ENCODE measurements at regions of chr19 and their contacts with region 1.

Region 1: DNA sequence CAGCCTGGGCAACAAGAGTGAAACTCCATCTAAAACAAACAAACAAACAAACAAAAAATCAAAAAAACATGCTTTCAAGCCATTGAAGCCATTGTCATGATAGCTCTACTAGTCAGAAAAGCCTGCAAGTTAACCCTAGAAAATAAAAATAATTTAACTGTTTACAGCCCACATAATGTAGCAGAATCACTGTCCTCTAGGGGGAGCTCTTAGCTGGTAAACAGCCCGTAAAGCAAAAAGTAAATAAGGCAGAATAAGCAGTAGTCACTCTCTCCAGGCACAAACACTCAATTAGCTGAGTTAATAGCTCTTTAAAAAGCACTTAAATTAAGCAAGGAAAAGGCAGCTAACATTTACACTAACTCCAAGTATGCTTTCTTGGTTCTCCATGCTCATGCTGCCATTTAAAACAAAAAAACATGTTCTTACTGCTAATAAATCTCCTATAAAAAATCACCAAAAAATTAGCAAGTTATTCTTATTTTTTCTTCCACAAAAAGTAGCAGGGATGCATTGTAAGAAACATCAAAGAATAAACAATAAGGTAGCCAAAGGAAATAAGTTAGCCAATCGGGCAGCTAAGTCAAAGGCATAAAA is 11.3 kb downstream of the LILRB4 start:
- DNase-seq: no peak
- H3K4me3 Mint-ChIP-seq: no peak overlapping the region
- H3K27ac Mint-ChIP-seq: no peak overlapping the region
- H3K4me1 Mint-ChIP-seq: peaks cover 4% of the 10 kb centered on the region
- H3K27me3 Mint-ChIP-seq: peaks cover 4% of the 10 kb centered on the region

Region 2: GRCh38 chr19:54653181-54653809 is 20.8 kb before region 1 on chr19:
- intact Hi-C with region 1: loop called (anchors 1 kb)
- DNase-seq: no peak
- H3K4me3 Mint-ChIP-seq: no peak overlapping the region
- H3K27ac Mint-ChIP-seq: no peak overlapping the region
- H3K4me1 Mint-ChIP-seq: no peaks in the 10 kb centered on the region
- H3K27me3 Mint-ChIP-seq: peaks cover 10% of the 10 kb centered on the region

Measured in activated T-helper 1 cell treated with anti-CD3 and anti-CD28 coated beads, Interleukin-12 subunit alpha, Interleukin-12 subunit beta, Interleukin-2, Interleukin-4 antibody, amounts not matched to agents 30 ng/mL and 10 ng/mL and 1 ng/mL, durations not matched to agents 14 hours and 24 hours and 36 hours (primary cell).